Vagina (tissue), 2 donors: ENCODE measurements at regions of chr1 and their contacts with region 1.

Region 1: GRCh38 chr1:5156416-5157120 is 502.2 kb downstream of the AJAP1 start:
- DNase-seq: no peak
- H3K4me3 ChIP-seq: no peak overlapping the region
- H3K27ac ChIP-seq: no peak overlapping the region
- H3K4me1 ChIP-seq: no peaks in the 10 kb centered on the region
- H3K27me3 ChIP-seq: no peaks in the 10 kb centered on the region
- CTCF ChIP-seq: no peak
- POLR2A ChIP-seq: no peak

Region 2: DNA sequence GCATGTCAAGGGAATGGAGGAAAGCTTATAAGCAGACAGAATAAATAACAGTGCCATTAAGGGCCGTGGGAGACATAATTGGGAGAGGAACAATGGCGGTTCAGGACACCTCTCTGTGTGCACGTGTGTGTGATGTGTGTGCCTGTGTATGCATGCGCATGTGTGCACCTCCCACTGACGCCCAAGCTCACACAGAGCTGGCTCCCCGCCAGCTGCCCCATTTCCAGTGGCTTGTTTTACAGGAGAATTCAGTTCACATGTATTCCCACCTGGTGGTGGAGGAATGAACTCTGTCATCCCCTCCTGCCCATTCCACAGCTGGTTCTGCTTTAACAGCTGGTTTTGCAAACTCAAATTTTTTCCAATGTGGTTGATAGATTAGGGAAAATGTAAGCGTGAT is 240.0 kb before region 1 on chr1:
- intact Hi-C with region 1: loop called (anchors 5 kb)
- DNase-seq: no peak
- H3K4me3 ChIP-seq: no peak overlapping the region
- H3K27ac ChIP-seq: no peak overlapping the region
- H3K4me1 ChIP-seq: no peaks in the 10 kb centered on the region
- H3K27me3 ChIP-seq: no peaks in the 10 kb centered on the region
- CTCF ChIP-seq: no peak
- POLR2A ChIP-seq: no peak

Region 3: DNA sequence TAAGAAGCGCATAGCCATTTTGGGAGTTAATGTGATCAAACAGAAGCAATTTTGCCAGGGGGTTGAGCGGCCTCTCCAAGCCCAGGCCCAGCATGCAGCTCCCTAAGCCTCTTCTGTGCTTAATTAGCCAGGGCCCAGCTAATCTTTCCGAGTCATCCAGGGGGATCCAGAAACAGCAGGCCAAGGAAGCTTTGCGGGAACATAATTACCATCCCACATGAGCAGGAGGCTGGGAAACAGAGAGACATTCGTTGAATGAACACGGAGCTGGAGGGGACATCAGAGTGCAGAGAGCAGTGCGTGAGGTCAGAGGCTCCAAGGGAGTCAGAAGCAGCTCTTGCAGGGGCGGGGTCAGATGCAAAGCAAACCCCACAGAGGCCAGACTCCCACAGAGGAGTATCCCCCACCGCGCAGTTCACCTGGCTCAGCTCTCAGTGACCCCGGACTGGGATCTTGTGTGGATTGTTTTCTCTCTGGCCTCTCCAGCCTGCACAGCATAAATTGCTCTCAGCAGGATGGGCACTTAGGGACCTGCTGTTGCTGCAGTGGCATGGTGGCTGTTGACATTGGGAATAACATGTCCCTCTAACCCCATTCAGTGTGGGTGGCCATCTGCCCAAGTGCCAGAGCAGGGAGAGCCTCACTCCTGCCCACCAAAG is 155.2 kb after region 1 on chr1:
- intact Hi-C with region 1: no loop called
- DNase-seq: no peak
- H3K4me3 ChIP-seq: no peak overlapping the region
- H3K27ac ChIP-seq: no peak overlapping the region
- H3K4me1 ChIP-seq: no peaks in the 10 kb centered on the region
- H3K27me3 ChIP-seq: no peaks in the 10 kb centered on the region
- CTCF ChIP-seq: no peak
- POLR2A ChIP-seq: no peak

Region 4: GRCh38 chr1:5415621-5416020 is 259.1 kb after region 1 on chr1:
- intact Hi-C with region 1: no loop called
- DNase-seq: no peak
- H3K4me3 ChIP-seq: no peak overlapping the region
- H3K27ac ChIP-seq: no peak overlapping the region
- H3K4me1 ChIP-seq: no peaks in the 10 kb centered on the region
- H3K27me3 ChIP-seq: no peaks in the 10 kb centered on the region
- CTCF ChIP-seq: no peak
- POLR2A ChIP-seq: no peak